PC-9 (cell line): ENCODE measurements at regions of chr20 and their contacts with region 1.

Region 1: GRCh38 chr20:20052074-20052970 is at the starts of genes CFAP61 and CRNKL1:
- DNase-seq: peak; percentile 92 to 96
- H3K4me3 ChIP-seq: peak within 1 kb of the TSS; percentile 94
- H3K27ac ChIP-seq: peak within 1 kb of the TSS; percentile 74
- H3K4me1 ChIP-seq: peaks cover 10% of the 10 kb centered on the region
- H3K27me3 ChIP-seq: no peaks in the 10 kb centered on the region
- CTCF ChIP-seq: no peak
- total RNA-seq, gene CFAP61: 1.7 and 2.6 TPM in 2 replicates
- total RNA-seq, gene CRNKL1: 24.8 and 33.0 TPM in 2 replicates

Region 2: GRCh38 chr20:20002101-20002998 is 50.0 kb before region 1 on chr20:
- CTCF ChIA-PET with region 1: no interaction called
- POLR2A ChIA-PET with region 1: interaction called, 10 read pairs
- intact Hi-C with region 1: no loop called
- DNase-seq: no peak
- H3K4me3 ChIP-seq: no peak overlapping the region
- H3K27ac ChIP-seq: peak overlapping the region; percentile 13; the same call in 1 of the 2 replicates
- H3K4me1 ChIP-seq: peaks cover 14% of the 10 kb centered on the region
- H3K27me3 ChIP-seq: no peaks in the 10 kb centered on the region
- CTCF ChIP-seq: no peak

Region 3: GRCh38 chr20:20017001-20017843 is 35.1 kb before region 1 on chr20 and contains the start of gene NAA20:
- CTCF ChIA-PET with region 1: no interaction called
- POLR2A ChIA-PET with region 1: interaction called, 5 read pairs
- intact Hi-C with region 1: loop called (anchors 5 kb)
- DNase-seq: peak; percentile 85 to 96
- H3K4me3 ChIP-seq: peak within 1 kb of the TSS; percentile 99
- H3K27ac ChIP-seq: peak within 1 kb of the TSS; percentile 74
- H3K4me1 ChIP-seq: peaks cover 26% of the 10 kb centered on the region
- H3K27me3 ChIP-seq: no peaks in the 10 kb centered on the region
- CTCF ChIP-seq: peak; percentile 51; the same call in 1 of the 2 replicates
- total RNA-seq, gene NAA20: 167 and 168 TPM in 2 replicates

Region 4: DNA sequence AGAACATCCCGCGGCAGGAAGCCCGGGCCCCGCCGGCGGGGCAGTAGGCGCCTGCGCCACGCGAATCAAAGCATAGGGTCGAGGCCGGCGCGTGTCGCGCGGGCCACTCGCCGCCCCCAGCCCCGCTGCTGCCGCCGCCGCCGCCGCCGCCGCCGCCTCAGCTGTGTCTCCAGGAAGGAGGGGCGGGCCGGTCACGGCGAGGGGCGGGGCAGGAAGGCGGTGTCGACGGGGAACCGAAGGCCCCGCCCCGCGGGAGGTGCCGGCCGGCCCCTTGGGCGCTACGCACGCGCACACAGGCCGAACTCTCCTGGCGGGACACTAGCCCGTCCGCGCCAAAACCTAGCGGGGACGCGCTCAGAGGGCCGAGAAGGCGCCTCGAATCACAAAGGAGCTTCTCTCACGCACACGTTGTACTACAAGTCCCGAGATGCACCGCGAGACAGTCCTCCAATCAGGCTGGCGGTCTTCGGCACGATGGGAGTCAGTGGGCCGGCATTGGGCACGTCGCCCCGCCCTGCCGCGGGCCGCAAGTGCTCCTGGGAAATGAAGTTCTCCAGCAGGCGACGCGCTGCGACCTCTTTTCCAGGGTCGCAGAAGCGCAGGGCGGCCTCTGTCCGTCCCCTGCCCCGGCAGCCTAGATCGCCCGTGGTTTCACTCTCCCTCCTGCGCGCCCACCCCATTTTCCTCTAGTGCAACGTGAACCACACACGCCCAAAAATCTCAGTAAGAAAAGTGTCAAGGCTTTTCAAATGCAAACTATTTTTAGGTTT is 660.3 kb after region 1 on chr20 and contains the start of gene RALGAPA2:
- CTCF ChIA-PET with region 1: no interaction called
- POLR2A ChIA-PET with region 1: no interaction called
- intact Hi-C with region 1: loop called (anchors 5 kb)
- DNase-seq: peak; percentile 95 to 96
- H3K4me3 ChIP-seq: peak within 1 kb of the TSS; percentile 92
- H3K27ac ChIP-seq: peak within 1 kb of the TSS; percentile 50; the same call in 1 of the 2 replicates
- H3K4me1 ChIP-seq: peaks cover 26% of the 10 kb centered on the region
- H3K27me3 ChIP-seq: no peaks in the 10 kb centered on the region
- CTCF ChIP-seq: no peak
- total RNA-seq, gene RALGAPA2: 19.2 and 28.7 TPM in 2 replicates